A549 (cell line): ENCODE measurements at regions of chrX and their contacts with region 1.

Region 1: GRCh38 chrX:153032397-153033118 is 23.7 kb upstream of the PNMA3 start:
- DNase-seq: peak; percentile 55 to 77
- ATAC-seq: peak; percentile 80 to 90
- H3K4me3 ChIP-seq: peak overlapping the region; percentile 34; the same call in 2 of the 3 replicates
- H3K27ac ChIP-seq: peak overlapping the region in 1 of 2 experiments; percentile 44; a peak in 2 of 6 replicates
- H3K4me1 ChIP-seq: no peaks in the 10 kb centered on the region
- CTCF ChIP-seq: peak; percentile 80
- EP300 ChIP-seq: no peak
- POLR2A ChIP-seq: no peak
- RAD21 ChIP-seq: peak; percentile 88 to 97

Region 2: GRCh38 chrX:153049093-153049492 is 16.5 kb after region 1 on chrX:
- CTCF ChIA-PET with region 1: interaction called, 21 read pairs
- POLR2A ChIA-PET with region 1: no interaction called
- DNase-seq: no peak
- ATAC-seq: no peak
- H3K4me3 ChIP-seq: no peak overlapping the region
- H3K27ac ChIP-seq: no peak overlapping the region
- H3K4me1 ChIP-seq: no peaks in the 10 kb centered on the region
- CTCF ChIP-seq: no peak
- EP300 ChIP-seq: no peak
- POLR2A ChIP-seq: no peak
- RAD21 ChIP-seq: no peak

Region 3: DNA sequence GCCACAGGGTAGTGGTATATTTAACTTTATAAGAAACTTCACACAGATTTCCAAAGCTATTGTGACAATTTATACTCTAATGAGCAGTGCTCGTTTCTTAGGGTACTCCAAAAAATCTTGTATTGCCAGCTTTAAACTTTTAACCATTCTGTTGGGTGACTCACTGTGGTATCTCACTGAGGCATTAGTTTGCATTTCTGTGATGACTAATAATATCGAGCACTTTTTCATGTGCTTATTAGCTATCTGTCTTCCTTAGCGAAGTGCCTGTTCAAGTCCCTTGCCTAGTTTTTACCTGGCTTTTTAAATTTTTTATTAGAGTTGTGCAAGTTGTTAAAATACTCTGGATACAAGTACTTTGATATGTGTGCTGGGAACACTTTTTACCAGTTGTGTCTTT is 29.2 kb after region 1 on chrX:
- CTCF ChIA-PET with region 1: interaction called, 14 read pairs
- POLR2A ChIA-PET with region 1: no interaction called
- DNase-seq: peak in 1 of 2 experiments; percentile 32
- ATAC-seq: peak in 1 of 2 experiments; percentile 58; a peak in 2 of 6 replicates
- H3K4me3 ChIP-seq: no peak overlapping the region
- H3K27ac ChIP-seq: 0 out of 6 replicates have a peak overlapping the region, but pooled peaks of 1 of the 2 experiments have one; percentile 41
- H3K4me1 ChIP-seq: peaks cover 26% of the 10 kb centered on the region; the same call in 2 of the 3 replicates
- CTCF ChIP-seq: no peak
- EP300 ChIP-seq: no peak
- POLR2A ChIP-seq: no peak
- RAD21 ChIP-seq: no peak

Region 4: GRCh38 chrX:153190381-153190780 is 157.8 kb after region 1 on chrX:
- CTCF ChIA-PET with region 1: no interaction called
- POLR2A ChIA-PET with region 1: no interaction called
- DNase-seq: no peak
- ATAC-seq: 0 out of 6 replicates have a peak, but pooled peaks of 1 of the 2 experiments have one; percentile 54
- H3K4me3 ChIP-seq: no peak overlapping the region
- H3K27ac ChIP-seq: no peak overlapping the region
- H3K4me1 ChIP-seq: no peaks in the 10 kb centered on the region
- CTCF ChIP-seq: no peak
- EP300 ChIP-seq: no peak
- POLR2A ChIP-seq: no peak
- RAD21 ChIP-seq: no peak

Region 5: GRCh38 chrX:153981771-153982533 is 949.4 kb after region 1 on chrX:
- CTCF ChIA-PET with region 1: no interaction called
- POLR2A ChIA-PET with region 1: no interaction called
- DNase-seq: no peak
- ATAC-seq: no peak
- H3K4me3 ChIP-seq: no peak overlapping the region
- H3K27ac ChIP-seq: no peak overlapping the region
- H3K4me1 ChIP-seq: no peaks in the 10 kb centered on the region
- CTCF ChIP-seq: no peak
- EP300 ChIP-seq: no peak
- POLR2A ChIP-seq: no peak
- RAD21 ChIP-seq: no peak